Lower lobe of right lung (tissue), 2 donors: ENCODE measurements at regions of chr10 and their contacts with region 1.

Region 1: DNA sequence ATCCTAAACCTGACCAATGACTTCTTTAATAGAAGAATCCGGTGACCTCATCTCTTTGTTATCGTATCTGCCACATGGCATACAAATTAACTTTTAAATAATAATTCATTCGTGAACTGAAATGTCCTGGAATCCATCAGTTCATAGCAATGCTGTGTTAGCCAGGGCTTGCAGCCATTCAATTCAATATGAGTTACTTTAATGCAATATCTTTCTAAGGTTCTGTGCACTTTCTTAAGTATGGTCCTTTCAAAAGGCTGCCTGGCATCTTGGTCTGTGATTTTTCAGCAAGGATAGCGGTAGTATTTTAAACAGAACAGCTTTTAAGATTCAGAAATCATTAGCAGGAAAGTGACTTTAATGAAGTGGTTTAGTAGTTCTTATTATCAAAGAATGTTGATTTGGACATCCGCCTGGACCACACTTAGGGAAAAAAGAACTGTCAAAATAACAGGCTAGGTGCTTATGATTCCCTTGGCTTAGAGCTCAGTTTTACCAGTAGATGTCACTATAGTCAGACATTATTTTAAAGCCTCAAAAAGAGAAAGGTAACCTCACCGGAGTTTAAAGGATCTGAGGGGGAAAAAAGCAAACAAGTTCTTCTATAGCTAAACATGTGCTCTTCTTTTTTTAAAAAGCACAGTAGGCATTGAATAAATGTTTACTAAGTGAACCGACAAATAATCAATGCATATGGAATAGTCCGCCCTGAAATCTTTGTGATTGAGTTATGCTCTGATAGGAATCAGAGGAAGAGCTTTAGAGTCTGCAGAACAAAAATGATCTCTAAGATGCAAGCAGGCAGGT is 22.7 kb downstream of the SLC35G1 start:
- DNase-seq: no peak
- ATAC-seq: peak; percentile 62 to 87
- H3K4me3 ChIP-seq: peak overlapping the region; percentile 4
- H3K27ac ChIP-seq: no peak overlapping the region
- H3K4me1 ChIP-seq: no peaks in the 10 kb centered on the region
- H3K27me3 ChIP-seq: no peaks in the 10 kb centered on the region
- CTCF ChIP-seq: peak; percentile 52

Region 2: GRCh38 chr10:93445097-93445960 is 471.1 kb before region 1 on chr10:
- intact Hi-C with region 1: no loop called
- DNase-seq: peak; percentile 96
- ATAC-seq: peak; percentile 97
- H3K4me3 ChIP-seq: no peak overlapping the region
- H3K27ac ChIP-seq: peak overlapping the region; percentile 86
- H3K4me1 ChIP-seq: peaks cover 61% of the 10 kb centered on the region
- H3K27me3 ChIP-seq: no peaks in the 10 kb centered on the region
- CTCF ChIP-seq: no peak

Region 3: DNA sequence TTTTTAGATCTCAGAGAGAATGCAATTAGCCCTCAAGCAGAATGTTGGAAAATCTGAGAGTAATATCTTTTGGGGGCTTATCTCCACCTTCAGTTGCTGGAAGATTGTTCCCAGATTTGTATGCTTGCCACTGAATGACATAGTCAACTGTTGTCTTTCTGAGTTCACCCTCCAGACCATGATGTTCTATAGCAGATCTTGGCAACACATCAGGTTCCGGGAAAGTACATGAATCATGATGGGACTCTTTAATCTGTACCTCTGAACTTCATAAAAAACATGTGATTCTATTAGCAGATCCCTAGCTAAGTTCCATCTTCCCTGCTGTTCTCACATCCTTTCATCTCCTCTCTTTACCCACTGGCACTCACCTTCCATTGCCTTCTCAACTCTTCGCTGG is 146.2 kb after region 1 on chr10:
- intact Hi-C with region 1: no loop called
- DNase-seq: no peak
- ATAC-seq: no peak
- H3K4me3 ChIP-seq: no peak overlapping the region
- H3K27ac ChIP-seq: no peak overlapping the region
- H3K4me1 ChIP-seq: no peaks in the 10 kb centered on the region
- H3K27me3 ChIP-seq: no peaks in the 10 kb centered on the region
- CTCF ChIP-seq: no peak

Region 4: GRCh38 chr10:94320285-94320914 is 403.9 kb after region 1 on chr10:
- intact Hi-C with region 1: loop called (anchors 5 kb)
- DNase-seq: peak; percentile 61
- ATAC-seq: peak; percentile 44 to 53
- H3K4me3 ChIP-seq: no peak overlapping the region
- H3K27ac ChIP-seq: no peak overlapping the region
- H3K4me1 ChIP-seq: no peaks in the 10 kb centered on the region
- H3K27me3 ChIP-seq: no peaks in the 10 kb centered on the region
- CTCF ChIP-seq: peak; percentile 89

Region 5: GRCh38 chr10:94344522-94345122 is 428.2 kb after region 1 on chr10:
- intact Hi-C with region 1: no loop called
- DNase-seq: no peak
- ATAC-seq: no peak
- H3K4me3 ChIP-seq: no peak overlapping the region
- H3K27ac ChIP-seq: no peak overlapping the region
- H3K4me1 ChIP-seq: no peaks in the 10 kb centered on the region
- H3K27me3 ChIP-seq: no peaks in the 10 kb centered on the region
- CTCF ChIP-seq: no peak